ENCODE measurements at regions of chr17 and their contacts with region 1.

Region 1: DNA sequence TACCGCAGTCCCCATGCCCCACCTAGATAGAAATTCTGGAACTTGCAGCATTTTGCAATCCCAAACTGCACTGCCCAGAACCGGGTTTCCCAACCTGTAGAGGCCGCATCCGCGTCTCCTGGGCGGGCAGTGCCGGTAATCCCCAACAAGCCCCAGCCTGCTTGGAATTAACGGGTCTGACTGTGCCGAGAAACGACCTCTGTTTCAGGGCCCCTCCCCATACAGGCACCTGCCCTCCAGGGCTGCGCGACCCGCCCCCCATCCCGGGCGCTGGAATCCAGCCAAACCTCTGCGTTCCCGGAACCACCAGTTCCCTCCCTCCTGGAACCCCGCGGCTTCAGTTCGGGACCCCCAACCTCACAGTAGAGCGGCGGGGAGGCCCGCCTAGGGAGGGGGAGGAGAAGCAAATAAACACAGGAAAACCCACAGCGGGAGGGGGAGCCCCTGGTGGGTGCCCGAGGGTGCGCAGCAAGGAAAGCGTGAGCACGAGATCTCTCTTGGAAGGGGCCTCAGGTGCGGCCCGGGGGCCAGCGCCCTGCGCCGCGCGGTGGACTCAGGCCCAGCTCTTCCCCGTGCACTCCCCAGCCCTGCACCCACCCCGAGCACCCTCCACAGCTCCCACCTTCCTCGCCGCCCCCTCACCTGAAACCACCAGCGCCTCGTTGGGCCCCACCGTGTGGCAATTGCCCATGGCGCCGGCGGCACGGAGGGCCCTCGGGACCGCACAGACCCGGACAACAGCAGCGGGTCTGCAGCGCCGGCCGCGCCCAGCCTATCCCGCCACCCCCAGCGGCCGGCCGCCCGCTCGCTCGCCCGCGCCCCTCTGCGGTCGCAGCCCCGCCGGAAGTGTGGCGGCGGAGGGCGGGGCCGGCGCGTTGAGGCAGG is at the start of gene FLOT2:
- DNase-seq: peak; percentile 22
- H3K4me3 ChIP-seq: peak within 1 kb of the TSS; percentile 63 to 85 (median 66)
- H3K27ac ChIP-seq: peak within 1 kb of the TSS; percentile 19
- H3K4me1 ChIP-seq: peaks cover 41% of the 10 kb centered on the region
- H3K27me3 ChIP-seq: no peaks in the 10 kb centered on the region
- CTCF ChIP-seq: peak; percentile 4 to 31
- POLR2A ChIP-seq: peak; percentile 80
- total RNA-seq, gene FLOT2: 131 and 169 TPM in 2 replicates

Region 2: GRCh38 chr17:28878981-28879380 is 18.1 kb before region 1 on chr17:
- CTCF ChIA-PET with region 1: interaction called, 11 read pairs
- POLR2A ChIA-PET with region 1: no interaction called
- dilution Hi-C with region 1: no loop called
- intact Hi-C with region 1: loop called (anchors 2 kb)
- DNase-seq: peak; percentile 33
- H3K4me3 ChIP-seq: no peak overlapping the region
- H3K27ac ChIP-seq: no peak overlapping the region
- H3K4me1 ChIP-seq: no peaks in the 10 kb centered on the region
- H3K27me3 ChIP-seq: no peaks in the 10 kb centered on the region
- CTCF ChIP-seq: peak; percentile 10 to 47
- POLR2A ChIP-seq: no peak

Region 3: DNA sequence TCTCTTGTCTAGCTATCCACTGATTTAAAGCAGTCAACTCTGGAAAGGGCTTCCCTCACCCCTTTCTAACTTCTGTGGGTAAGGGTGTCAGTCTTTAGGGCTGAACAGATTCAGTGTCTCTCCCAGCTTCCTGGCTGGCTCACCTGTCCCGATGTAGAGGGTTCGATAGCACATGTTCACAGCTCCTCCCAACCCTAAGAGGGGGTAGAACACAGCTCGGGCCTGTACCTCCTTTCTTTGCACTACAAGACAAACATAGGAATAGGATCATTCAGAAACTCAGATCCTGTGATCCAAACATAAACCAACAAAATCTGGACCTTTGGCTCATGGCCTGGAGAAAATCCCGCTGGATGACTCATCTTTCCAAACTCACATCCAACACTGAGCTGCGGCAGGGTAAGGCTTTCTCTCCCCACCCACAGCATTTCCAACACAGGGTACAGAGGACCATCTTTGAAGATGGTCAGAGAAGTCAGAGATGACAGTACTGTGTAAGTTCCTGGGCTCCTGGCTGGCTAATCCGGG is 11.6 kb after region 1 on chr17:
- CTCF ChIA-PET with region 1: interaction called, 17 read pairs
- POLR2A ChIA-PET with region 1: interaction called, 5 read pairs
- dilution Hi-C with region 1: no loop called
- intact Hi-C with region 1: no loop called
- DNase-seq: peak; percentile 83
- H3K4me3 ChIP-seq: no peak overlapping the region
- H3K27ac ChIP-seq: peak overlapping the region; percentile 22
- H3K4me1 ChIP-seq: peaks cover 21% of the 10 kb centered on the region
- H3K27me3 ChIP-seq: no peaks in the 10 kb centered on the region
- CTCF ChIP-seq: no peak
- POLR2A ChIP-seq: no peak

Region 4: DNA sequence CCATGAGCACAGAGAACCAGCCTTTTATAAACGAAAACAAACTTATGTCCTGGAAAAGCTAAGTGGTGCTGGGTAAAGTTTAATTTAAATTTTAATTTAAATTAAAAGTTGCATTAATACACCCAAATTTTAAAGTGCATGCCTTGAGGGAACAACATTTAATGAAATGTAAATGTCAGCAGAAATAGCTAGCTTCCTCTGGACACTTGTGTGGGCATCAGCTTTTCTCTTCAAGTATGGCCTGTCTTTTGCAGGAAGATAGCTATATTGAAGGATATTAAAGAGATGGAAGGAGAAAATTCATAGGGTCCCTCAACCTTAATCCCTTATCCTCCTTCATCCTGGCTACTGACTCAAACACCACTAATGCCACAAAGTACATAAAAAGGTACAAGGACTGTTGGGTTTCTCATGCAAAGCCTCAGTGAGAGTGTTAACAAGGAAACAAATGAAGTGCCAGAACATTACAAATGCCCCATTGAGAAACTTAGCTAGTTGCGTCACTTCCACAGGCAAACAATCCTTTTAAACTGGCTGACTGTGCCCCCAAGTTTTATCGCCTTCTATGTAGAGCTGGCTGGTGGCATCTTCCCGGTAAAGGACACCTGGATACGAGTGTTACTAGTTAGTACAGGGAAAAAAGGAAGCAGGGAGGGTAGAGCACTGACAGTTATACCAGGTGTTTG is 40.1 kb after region 1 on chr17:
- CTCF ChIA-PET with region 1: no interaction called
- POLR2A ChIA-PET with region 1: no interaction called
- dilution Hi-C with region 1: no loop called
- intact Hi-C with region 1: no loop called
- DNase-seq: no peak
- H3K4me3 ChIP-seq: no peak overlapping the region
- H3K27ac ChIP-seq: no peak overlapping the region
- H3K4me1 ChIP-seq: peaks cover 11% of the 10 kb centered on the region
- H3K27me3 ChIP-seq: no peaks in the 10 kb centered on the region
- CTCF ChIP-seq: no peak
- POLR2A ChIP-seq: no peak